MCF 10A (cell line): ENCODE measurements at regions of chr20 and their contacts with region 1.

Region 1: DNA sequence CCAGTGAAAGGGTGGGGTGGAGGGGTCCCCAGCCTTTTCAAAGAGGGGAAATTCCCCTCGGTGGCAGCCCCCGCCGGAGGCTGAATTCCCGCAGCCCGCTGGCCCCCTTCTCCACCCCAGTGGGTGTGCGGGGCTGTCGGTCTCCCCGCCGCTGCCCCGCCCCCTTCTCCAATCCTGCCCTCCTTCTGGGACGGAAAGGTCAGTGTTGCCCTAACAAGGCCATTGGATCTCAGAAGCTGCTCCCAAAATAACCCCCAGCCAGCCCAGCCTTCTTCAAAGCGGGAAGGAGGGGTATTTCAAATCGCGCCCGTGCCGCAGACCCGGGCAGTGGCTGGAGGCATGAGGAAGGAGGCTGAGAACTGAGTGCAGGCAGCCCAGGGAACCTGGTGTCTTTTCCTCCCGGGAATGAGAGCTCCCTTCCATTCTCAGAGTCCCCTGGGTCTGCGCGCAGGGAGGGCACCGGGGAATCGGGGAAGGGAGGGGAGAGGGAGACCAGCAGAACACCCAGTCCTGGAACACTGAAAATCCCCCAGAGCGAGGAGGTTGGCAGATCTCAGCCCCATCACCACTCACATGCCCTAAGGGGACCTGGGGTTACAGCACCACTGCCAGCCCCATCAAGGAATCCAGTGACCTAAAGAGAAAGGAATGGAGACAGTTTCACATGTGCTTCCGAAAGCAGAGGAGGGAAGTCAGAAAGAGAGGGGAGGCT is at the start of gene JPH2:
- DNase-seq: peak; percentile 92
- H3K4me3 Mint-ChIP-seq: peak within 1 kb of the TSS; percentile 67
- H3K27ac Mint-ChIP-seq: peak within 1 kb of the TSS; percentile 79
- H3K4me1 Mint-ChIP-seq: peaks cover 63% of the 10 kb centered on the region
- H3K27me3 Mint-ChIP-seq: no peaks in the 10 kb centered on the region
- CTCF ChIP-seq: no peak
- total RNA-seq, gene JPH2: 11.1 and 14.7 TPM in 2 replicates

Region 2: GRCh38 chr20:43448748-43449535 is 738.3 kb before region 1 on chr20:
- CTCF ChIA-PET with region 1: interaction called, 15 read pairs
- POLR2A ChIA-PET with region 1: no interaction called
- intact Hi-C with region 1: loop called (anchors 5 kb)
- DNase-seq: peak; percentile 56
- H3K4me3 Mint-ChIP-seq: no peak overlapping the region
- H3K27ac Mint-ChIP-seq: no peak overlapping the region
- H3K4me1 Mint-ChIP-seq: no peaks in the 10 kb centered on the region
- H3K27me3 Mint-ChIP-seq: peaks cover 9% of the 10 kb centered on the region
- CTCF ChIP-seq: peak; percentile 82

Region 3: GRCh38 chr20:43942661-43943290 is 244.4 kb before region 1 on chr20:
- CTCF ChIA-PET with region 1: no interaction called
- POLR2A ChIA-PET with region 1: no interaction called
- intact Hi-C with region 1: no loop called
- DNase-seq: peak; percentile 64
- H3K4me3 Mint-ChIP-seq: no peak overlapping the region
- H3K27ac Mint-ChIP-seq: peak overlapping the region; percentile 71
- H3K4me1 Mint-ChIP-seq: peaks cover 42% of the 10 kb centered on the region
- H3K27me3 Mint-ChIP-seq: no peaks in the 10 kb centered on the region
- CTCF ChIP-seq: no peak

Region 4: DNA sequence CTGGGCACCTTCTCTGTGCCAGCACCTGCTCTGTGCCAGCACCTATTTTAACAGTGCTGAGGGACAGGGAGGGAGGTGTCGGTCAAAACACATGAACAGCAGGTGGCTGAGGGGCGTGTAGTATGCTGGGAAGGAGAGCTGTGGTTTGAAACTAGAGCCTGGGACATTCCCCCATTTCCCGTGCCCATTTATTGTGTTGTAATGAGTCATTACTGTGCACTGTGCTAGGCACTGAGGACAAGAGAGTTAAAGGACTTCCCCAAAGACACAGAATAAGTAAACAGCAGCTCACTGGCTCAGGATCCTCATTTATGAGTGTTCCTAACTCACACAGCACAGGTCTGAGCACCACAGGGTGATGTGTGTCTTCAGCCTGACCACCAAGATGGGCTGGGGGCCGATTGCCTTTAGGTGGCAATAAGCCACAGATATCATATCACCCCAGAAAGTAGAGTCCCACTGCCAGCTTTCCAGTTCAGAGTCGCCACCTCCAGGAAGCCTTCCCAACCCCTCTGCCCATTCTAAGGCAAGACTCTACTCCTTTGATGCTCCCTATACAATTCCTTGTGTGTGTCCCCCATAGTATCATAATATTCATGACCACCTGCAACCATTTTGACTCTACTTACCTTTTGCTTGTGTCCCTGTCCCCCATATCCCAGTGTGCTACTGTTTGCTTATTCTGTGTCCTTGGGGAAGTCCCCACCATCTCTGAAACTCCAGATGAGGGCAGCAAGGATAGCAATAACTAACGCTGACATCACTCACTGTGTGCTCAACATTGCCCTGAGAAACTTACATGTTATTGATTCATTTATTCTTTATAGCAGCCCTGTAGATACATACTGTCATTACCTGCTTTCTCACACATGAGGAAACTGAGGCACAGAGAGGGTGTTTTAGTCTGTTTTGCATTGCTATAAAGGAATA is 185.3 kb before region 1 on chr20:
- CTCF ChIA-PET with region 1: no interaction called
- POLR2A ChIA-PET with region 1: no interaction called
- intact Hi-C with region 1: no loop called
- DNase-seq: peak; percentile 21
- H3K4me3 Mint-ChIP-seq: no peak overlapping the region
- H3K27ac Mint-ChIP-seq: no peak overlapping the region
- H3K4me1 Mint-ChIP-seq: no peaks in the 10 kb centered on the region
- H3K27me3 Mint-ChIP-seq: no peaks in the 10 kb centered on the region
- CTCF ChIP-seq: no peak

Region 5: DNA sequence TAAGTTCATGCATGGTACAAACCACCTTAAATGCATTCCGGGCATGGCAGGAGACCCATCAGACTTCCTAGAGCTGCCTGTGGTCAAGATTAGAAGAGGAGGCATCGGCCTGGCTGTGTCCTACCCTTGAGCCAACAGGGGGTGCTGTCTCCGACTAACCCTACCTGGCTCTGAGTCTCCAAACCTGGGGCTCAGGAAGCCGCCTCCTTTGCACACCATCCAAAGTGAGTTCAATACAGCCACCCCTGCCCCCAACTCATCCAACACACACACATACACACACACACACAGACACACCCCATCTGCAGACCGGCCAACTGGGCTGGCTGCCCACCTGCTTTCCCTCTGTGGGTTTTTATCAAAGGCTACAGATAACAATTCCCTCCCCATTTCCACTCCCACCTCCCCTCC is 77.3 kb before region 1 on chr20:
- CTCF ChIA-PET with region 1: interaction called, 638 read pairs
- POLR2A ChIA-PET with region 1: interaction called, 32 read pairs
- intact Hi-C with region 1: no loop called
- DNase-seq: no peak
- H3K4me3 Mint-ChIP-seq: no peak overlapping the region
- H3K27ac Mint-ChIP-seq: no peak overlapping the region
- H3K4me1 Mint-ChIP-seq: peaks cover 20% of the 10 kb centered on the region
- H3K27me3 Mint-ChIP-seq: no peaks in the 10 kb centered on the region
- CTCF ChIP-seq: peak; percentile 10

Region 6: DNA sequence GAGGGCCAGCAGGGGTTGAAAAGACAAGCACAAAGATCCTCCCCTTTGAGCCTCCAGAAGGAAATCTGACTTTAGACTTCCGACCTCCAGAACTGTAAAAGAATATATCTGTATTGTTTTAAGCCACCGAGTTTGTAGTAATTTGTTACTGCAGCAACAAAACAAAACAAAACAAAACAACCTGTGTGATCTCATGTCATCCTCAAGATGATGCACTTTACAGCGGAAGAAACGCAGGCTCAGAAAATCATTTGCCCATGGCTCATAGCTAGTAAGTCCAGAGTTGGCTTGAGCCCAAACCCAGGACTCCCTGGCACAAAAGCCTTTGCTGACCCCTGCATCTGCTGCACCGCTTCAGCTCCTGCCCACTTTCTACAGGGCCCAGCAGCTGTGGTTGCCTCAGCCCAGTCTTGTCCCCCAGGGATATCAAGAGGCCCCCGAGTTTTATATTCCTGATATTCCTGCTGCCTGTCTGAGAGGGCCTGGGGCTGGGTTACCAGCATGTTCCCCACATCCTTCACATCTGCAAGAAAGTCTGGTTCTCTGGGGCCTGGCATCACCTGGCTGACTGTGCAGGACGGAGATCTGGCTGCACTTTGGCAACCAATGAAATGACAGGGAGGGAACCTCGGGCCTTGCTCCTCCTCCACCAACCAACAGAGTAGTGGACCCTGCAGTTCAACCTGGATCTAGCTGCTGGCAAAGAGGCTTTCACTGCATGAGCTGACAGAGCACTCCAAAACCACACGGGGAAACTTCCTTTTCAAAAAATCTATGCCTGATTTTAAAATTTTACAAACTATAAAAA is 57.1 kb before region 1 on chr20:
- CTCF ChIA-PET with region 1: interaction called, 27 read pairs
- POLR2A ChIA-PET with region 1: interaction called, 6 read pairs
- intact Hi-C with region 1: no loop called
- DNase-seq: no peak
- H3K4me3 Mint-ChIP-seq: no peak overlapping the region
- H3K27ac Mint-ChIP-seq: no peak overlapping the region
- H3K4me1 Mint-ChIP-seq: no peaks in the 10 kb centered on the region
- H3K27me3 Mint-ChIP-seq: no peaks in the 10 kb centered on the region
- CTCF ChIP-seq: no peak

Region 7: DNA sequence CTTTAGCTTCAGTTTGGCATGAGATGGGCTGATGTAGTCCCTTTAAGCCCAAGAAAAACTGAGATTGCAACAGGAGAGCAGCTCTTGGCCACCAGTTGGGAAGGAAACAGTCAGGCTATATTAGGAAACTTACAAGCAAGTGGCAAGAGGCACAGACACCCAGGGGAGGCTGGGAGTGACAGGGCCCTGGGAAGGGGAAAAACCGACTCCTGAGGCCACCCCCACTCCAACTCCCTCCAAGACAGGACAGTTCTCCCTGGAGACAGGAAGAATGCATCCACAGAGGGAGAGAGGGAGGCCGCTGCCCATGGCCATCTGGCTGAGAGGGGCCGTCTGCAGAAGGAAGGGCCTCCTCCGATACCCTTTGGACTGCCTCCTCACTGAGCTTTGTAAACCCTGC is 20.7 kb before region 1 on chr20:
- CTCF ChIA-PET with region 1: interaction called, 23 read pairs
- POLR2A ChIA-PET with region 1: interaction called, 49 read pairs
- intact Hi-C with region 1: no loop called
- DNase-seq: peak; percentile 47
- H3K4me3 Mint-ChIP-seq: no peak overlapping the region
- H3K27ac Mint-ChIP-seq: no peak overlapping the region
- H3K4me1 Mint-ChIP-seq: peaks cover 23% of the 10 kb centered on the region
- H3K27me3 Mint-ChIP-seq: no peaks in the 10 kb centered on the region
- CTCF ChIP-seq: no peak

Region 8: GRCh38 chr20:44235702-44236101 is 48.5 kb after region 1 on chr20:
- CTCF ChIA-PET with region 1: no interaction called
- POLR2A ChIA-PET with region 1: no interaction called
- intact Hi-C with region 1: no loop called
- DNase-seq: no peak
- H3K4me3 Mint-ChIP-seq: no peak overlapping the region
- H3K27ac Mint-ChIP-seq: no peak overlapping the region
- H3K4me1 Mint-ChIP-seq: no peaks in the 10 kb centered on the region
- H3K27me3 Mint-ChIP-seq: peaks cover 17% of the 10 kb centered on the region
- CTCF ChIP-seq: no peak

Region 9: DNA sequence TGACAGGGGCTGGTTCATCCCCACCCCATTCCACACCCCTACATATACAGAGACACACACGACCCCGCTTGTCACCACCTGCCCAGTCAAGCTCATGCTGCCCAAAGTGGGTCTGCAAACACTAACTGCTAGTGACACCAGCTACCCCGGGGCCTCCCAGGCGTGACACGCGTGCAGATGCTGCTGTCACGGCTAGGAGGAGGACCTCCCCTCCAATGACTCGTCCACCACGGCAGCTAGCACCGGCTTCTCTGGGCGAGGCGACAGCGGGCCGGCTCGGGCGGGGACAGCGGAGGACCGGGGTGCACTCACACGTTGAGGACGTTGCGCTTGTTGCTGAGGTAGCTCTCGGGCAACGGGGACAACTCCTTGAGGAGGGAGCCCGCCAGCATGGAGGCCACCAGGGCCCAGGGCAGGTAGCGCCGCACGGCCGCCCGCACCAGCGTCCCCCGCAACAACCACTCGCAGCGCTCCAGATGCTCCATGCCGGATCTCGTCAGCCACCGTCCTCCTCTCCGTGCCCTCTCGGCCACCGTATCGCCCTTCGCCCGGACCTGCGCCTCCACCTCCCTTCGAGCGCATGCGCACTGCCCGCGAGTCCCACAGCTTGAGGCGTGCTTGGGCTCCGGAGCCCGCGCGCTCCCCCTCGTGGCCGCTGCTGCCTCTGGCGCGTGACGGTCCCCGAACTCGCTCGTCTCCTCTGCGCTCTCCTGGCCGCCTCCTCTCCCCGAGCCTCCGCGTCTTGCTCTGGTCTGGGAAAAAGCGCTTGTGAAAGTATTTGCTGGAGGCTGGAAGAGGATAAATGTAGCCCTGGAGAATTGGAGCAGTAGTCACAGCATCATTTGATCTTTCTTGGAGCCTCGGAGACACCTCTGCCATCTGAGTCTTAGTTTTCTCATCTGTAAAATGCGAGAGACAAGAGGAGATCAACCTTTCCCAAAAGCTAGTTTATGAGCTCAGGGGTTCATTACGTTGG is 123.7 kb after region 1 on chr20 and contains the start of gene FITM2:
- CTCF ChIA-PET with region 1: interaction called, 15 read pairs
- POLR2A ChIA-PET with region 1: interaction called, 6 read pairs
- intact Hi-C with region 1: no loop called
- DNase-seq: peak; percentile 97
- H3K4me3 Mint-ChIP-seq: peak within 1 kb of the TSS; percentile 96
- H3K27ac Mint-ChIP-seq: peak within 1 kb of the TSS; percentile 86
- H3K4me1 Mint-ChIP-seq: peaks cover 11% of the 10 kb centered on the region
- H3K27me3 Mint-ChIP-seq: no peaks in the 10 kb centered on the region
- CTCF ChIP-seq: peak; percentile 90
- total RNA-seq, gene FITM2: 7.2 and 8.1 TPM in 2 replicates

Region 10: GRCh38 chr20:45111799-45112471 is 924.7 kb after region 1 on chr20:
- CTCF ChIA-PET with region 1: no interaction called
- POLR2A ChIA-PET with region 1: no interaction called
- intact Hi-C with region 1: no loop called
- DNase-seq: peak; percentile 50
- H3K4me3 Mint-ChIP-seq: no peak overlapping the region
- H3K27ac Mint-ChIP-seq: no peak overlapping the region
- H3K4me1 Mint-ChIP-seq: no peaks in the 10 kb centered on the region
- H3K27me3 Mint-ChIP-seq: peaks cover 10% of the 10 kb centered on the region
- CTCF ChIP-seq: peak; percentile 64